ENCODE measurements at regions of chr2 and their contacts with region 1.

Region 1: GRCh38 chr2:164737612-164738081 is 104.0 kb downstream of the COBLL1 start:
- DNase-seq: peak; percentile 27 to 54
- ATAC-seq: peak; percentile 41 to 89 (median 83)
- H3K4me3 ChIP-seq: peak overlapping the region in 2 of 10 donors; percentile 3 to 13
- H3K27ac ChIP-seq: peak overlapping the region in 1 of 10 donors; percentile 17
- H3K4me1 ChIP-seq: peaks cover 0 to 57% (median 20%) of the 10 kb centered on the region in 9 donors
- H3K27me3 ChIP-seq: no peaks in the 10 kb centered on the region
- CTCF ChIP-seq: peak; percentile 42 to 92 (median 74)

Region 2: DNA sequence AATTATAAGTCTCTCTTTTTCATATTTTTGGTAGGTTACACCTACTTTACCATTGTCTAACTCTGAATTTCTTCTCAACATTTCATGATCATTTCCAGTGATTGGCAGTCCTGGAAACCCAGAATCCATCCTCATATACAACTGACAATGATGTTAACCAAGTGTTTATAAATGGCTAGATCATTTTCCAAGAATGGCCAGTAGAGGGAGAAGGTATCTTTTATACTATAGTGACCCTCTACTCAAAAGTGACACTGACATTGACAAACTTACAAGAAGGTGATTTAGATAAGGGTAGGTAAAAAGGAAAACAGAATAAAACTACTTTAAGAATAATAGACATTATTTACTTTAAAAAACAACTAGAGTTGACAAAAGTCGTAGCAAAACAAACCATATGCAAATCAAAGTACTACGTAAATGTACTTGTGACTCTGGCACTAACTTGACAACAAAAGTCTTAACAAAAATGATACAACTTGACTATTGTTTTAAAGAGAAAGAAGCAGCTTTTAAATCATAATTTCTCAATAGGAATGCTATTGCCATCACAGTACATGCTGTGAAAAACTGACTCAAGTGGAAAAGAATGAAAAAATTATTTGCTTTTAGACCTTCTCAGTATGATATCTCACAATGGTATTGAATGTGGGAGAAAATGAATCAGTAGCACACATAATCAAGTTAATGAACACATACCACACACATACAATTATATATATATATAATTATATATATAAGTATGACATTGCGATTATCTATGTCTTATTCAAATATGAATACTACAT is 39.8 kb before region 1 on chr2:
- intact Hi-C with region 1: loop called in 1 of 10 experiments (anchors 5 kb)
- DNase-seq: no peak
- ATAC-seq: no peak
- H3K4me3 ChIP-seq: no peak overlapping the region
- H3K27ac ChIP-seq: no peak overlapping the region
- H3K4me1 ChIP-seq: no peaks in the 10 kb centered on the region
- H3K27me3 ChIP-seq: no peaks in the 10 kb centered on the region
- CTCF ChIP-seq: peak; percentile 16 to 67 (median 53)

Region 3: DNA sequence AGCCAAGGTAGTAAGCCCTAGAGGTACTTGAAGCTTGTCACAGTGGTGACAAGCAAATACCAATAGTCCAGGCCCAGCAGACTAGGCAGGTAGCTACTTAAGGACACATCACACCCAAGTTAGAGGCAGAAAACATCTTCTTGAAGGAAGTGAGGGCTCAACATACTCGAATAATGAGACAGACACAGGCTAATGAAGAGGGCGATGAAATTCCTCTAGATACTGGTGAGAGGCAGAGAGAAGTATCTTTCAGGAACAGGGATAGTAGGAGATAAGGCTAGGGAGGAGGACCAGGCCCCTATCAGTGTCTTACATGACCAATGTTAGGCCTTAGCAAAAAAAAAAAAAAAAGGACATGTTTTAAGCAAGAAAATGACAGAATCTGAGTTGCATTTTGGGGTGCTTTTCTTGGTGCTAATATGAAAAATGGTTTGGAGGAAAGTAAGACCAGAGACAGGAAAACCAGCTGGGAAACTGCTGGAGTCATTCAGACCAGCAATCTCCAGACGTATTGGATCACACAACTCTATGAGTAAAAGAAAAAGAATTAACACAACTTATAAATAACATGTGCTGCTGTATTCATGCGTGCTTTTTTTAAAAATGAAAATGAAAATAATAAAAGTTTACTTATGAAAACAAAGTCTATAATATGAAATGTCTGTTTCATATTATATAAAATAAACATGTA is 66.3 kb after region 1 on chr2:
- intact Hi-C with region 1: no loop called
- DNase-seq: no peak
- ATAC-seq: peak in 4 of 8 donors; percentile 31 to 59 (median 48)
- H3K4me3 ChIP-seq: no peak overlapping the region
- H3K27ac ChIP-seq: peak overlapping the region in 4 of 10 donors; percentile 29 to 68 (median 52)
- H3K4me1 ChIP-seq: peaks cover 0 to 48% (median 25%) of the 10 kb centered on the region in 9 donors
- H3K27me3 ChIP-seq: no peaks in the 10 kb centered on the region
- CTCF ChIP-seq: no peak

Region 4: GRCh38 chr2:164910101-164910899 is 172.7 kb after region 1 on chr2:
- intact Hi-C with region 1: loop called in 3 of 10 experiments (anchors 2 to 5 kb)
- DNase-seq: no peak
- ATAC-seq: peak in 6 of 8 donors; percentile 38 to 65 (median 46)
- H3K4me3 ChIP-seq: no peak overlapping the region
- H3K27ac ChIP-seq: peak overlapping the region in 5 of 10 donors; percentile 1 to 61 (median 28)
- H3K4me1 ChIP-seq: peaks cover 4 to 61% (median 30%) of the 10 kb centered on the region in 9 donors
- H3K27me3 ChIP-seq: no peaks in the 10 kb centered on the region
- CTCF ChIP-seq: no peak

Region 5: DNA sequence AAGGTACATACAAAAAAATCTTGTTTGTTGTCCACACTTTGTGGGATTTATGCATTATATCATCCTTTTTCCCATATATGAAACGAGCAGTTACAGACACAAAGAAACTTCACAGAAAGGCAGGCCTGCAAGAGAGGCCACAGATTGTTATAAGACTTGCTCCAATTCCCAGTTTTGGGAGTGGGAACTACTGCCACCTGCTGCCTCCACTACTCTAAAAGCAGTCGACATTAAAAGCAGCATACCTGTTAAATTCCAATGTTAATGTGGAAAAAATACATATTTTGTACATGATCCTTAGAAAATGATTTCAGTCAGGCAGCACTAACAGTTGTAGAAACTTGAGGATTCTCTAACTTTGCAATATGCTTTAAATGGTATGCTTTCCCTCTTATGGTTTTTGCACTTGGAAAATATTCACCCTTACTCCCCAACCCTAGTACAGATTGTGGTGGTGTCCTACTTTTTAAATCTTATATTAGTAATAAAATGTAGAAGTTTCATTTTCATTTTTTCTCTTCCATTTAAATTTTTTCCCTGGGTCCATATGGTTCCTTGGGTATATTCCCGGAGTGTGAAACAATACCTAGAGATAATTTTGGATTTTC is 179.8 kb after region 1 on chr2:
- intact Hi-C with region 1: loop called (anchors 1 to 5 kb)
- DNase-seq: peak; percentile 16 to 49
- ATAC-seq: peak in 7 of 8 donors; percentile 55 to 79 (median 68)
- H3K4me3 ChIP-seq: no peak overlapping the region
- H3K27ac ChIP-seq: no peak overlapping the region
- H3K4me1 ChIP-seq: peaks cover 0 to 25% (median 15%) of the 10 kb centered on the region in 9 donors
- H3K27me3 ChIP-seq: no peaks in the 10 kb centered on the region
- CTCF ChIP-seq: peak; percentile 23 to 80 (median 66)

Region 6: GRCh38 chr2:164981217-164981990 is 243.8 kb after region 1 on chr2:
- intact Hi-C with region 1: loop called in 1 of 10 experiments (anchors 10 kb)
- DNase-seq: no peak
- ATAC-seq: no peak
- H3K4me3 ChIP-seq: no peak overlapping the region
- H3K27ac ChIP-seq: no peak overlapping the region
- H3K4me1 ChIP-seq: peaks cover 0 to 7% (median 0%) of the 10 kb centered on the region in 9 donors
- H3K27me3 ChIP-seq: no peaks in the 10 kb centered on the region
- CTCF ChIP-seq: no peak